ENCODE measurements at regions of chr7 and their contacts with region 1.

Region 1: DNA sequence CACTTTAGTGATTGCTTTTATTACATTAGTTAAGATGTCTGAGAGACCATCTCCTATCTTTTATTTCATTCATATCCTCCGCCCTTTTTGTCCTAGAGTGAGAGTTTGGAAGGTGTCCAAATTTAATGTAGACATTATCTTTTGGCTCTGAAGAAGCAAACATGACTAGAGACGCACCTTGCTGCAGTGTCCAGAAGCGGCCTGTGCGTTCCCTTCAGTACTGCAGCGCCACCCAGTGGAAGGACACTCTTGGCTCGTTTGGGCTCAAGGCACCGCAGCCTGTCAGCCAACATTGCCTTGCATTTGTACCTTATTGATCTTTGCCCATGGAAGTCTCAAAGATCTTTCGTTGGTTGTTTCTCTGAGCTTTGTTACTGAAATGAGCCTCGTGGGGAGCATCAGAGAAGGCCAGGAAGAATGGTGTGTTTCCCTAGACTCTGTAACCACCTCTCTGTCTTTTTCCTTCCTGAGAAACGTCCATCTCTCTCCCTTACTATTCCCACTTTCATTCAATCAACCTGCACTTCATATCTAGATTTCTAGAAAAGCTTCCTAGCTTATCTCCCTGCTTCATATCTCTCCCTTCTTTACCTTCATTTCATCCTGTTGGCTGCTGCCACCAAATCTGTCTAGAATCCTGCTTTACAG is 10.4 kb upstream of the CLCN1 start:
- DNase-seq: peak in 1 of 2 donors; percentile 53
- H3K4me3 ChIP-seq: no peak overlapping the region
- H3K27ac ChIP-seq: no peak overlapping the region
- H3K4me1 ChIP-seq: no peaks in the 10 kb centered on the region
- H3K27me3 ChIP-seq: no peaks in the 10 kb centered on the region
- CTCF ChIP-seq: peak; percentile 53 to 60

Region 2: DNA sequence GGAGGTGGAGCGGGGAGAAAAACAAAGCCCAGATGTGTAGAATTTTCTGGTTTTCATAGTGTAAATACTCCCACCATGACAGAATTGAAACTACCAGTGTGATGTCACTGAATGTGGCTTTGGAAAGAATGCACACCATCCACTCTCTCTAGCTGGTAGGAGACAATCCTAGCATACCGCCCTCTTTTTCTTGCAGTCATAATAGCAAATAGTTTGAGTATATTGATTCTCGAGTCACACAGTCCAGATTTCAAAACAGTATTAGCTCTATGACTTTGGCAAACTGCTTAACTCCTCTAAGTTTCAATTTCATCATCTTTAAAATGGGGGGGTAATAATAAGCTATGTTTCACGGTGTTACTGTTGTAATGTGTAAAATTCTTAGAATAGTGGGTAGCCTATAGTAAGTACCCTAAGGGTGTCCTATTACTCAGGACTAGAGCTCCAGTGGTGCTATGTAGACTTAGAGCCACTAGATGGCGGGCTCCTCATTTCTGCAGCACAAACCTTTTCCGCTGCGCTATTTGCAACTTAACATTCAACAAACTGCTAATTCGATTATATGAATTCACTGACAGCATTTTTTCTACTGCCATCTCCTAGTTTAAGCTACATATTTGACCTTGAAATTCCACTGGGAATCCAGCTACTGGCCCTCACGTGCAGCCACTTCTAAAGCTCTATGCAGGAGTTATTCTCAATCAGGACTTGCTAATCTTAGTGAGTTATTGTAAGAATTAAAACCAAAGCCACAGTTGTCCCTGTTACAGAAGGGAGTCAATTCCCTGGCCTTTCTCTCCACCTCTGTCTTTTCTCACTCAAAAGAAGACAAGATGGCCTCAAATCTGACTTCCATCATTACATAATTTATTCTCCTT is 65.0 kb before region 1 on chr7:
- intact Hi-C with region 1: loop called (anchors 2 kb)
- DNase-seq: peak; percentile 76
- H3K4me3 ChIP-seq: no peak overlapping the region
- H3K27ac ChIP-seq: no peak overlapping the region
- H3K4me1 ChIP-seq: no peaks in the 10 kb centered on the region
- H3K27me3 ChIP-seq: peaks cover 0 to 9% of the 10 kb centered on the region in 2 donors
- CTCF ChIP-seq: peak; percentile 76 to 92